ENCODE measurements at regions of chr16 and their contacts with region 1.

Region 1: DNA sequence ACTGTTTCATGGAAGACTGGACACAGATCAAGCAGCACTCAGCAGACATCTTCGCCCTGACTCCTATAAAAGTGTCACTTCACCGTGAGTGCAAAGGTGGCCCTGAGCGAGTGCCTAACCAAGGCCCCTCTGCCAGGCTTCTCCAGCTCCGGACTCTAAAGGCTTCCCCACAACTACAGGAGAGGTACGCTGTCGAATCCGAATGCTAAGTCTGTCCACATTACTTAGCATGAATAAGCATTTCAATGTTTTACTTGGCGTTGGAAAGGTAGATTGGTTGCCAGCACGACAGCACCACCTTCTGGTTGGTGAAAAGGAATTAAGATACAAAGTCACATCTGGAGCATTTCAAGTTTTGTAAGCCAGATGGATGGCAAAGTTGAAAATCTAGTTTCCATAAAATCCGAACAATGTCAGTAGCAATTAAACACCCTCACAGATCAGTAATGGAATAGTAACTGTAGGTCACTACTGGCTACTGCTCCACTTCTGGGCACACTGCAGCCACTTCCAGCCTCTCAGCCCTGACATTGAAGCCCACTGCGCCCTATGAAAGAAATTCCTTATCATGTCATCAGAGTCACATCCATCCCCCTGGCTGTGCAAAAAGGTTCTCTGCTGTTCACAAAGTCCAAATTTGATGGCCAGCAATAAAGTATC is 100.9 kb downstream of the PARN start:
- DNase-seq: peak; percentile 82
- H3K4me3 ChIP-seq: no peak overlapping the region
- H3K27ac ChIP-seq: peak overlapping the region; percentile 47
- H3K4me1 ChIP-seq: peaks cover 16% of the 10 kb centered on the region
- H3K27me3 ChIP-seq: no peaks in the 10 kb centered on the region
- CTCF ChIP-seq: peak; percentile 78 to 83

Region 2: DNA sequence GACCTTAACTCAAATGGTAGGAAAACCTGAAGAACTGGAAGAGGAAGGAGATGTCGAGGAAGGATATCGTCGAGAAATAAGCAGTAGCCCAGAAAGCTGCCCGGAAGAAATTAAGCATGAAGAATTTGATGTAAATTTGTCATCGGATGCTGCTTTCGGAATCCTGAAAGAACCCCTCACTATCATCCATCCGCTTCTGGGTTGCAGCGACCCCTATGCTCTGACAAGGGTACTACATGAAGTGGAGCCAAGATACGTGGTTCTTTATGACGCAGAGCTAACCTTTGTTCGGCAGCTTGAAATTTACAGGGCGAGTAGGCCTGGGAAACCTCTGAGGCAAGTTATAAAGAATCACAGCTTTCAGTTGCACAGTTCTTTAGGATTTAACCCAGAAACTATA is 593.7 kb before region 1 on chr16:
- CTCF ChIA-PET with region 1: no interaction called
- dilution Hi-C with region 1: no loop called
- in situ Hi-C with region 1: loop called in 1 of 2 experiments (anchors 25 kb)
- intact Hi-C with region 1: no loop called
- DNase-seq: no peak
- H3K4me3 ChIP-seq: no peak overlapping the region
- H3K27ac ChIP-seq: no peak overlapping the region
- H3K4me1 ChIP-seq: peaks cover 7% of the 10 kb centered on the region
- H3K27me3 ChIP-seq: no peaks in the 10 kb centered on the region
- CTCF ChIP-seq: peak; percentile 51 to 53

Region 3: DNA sequence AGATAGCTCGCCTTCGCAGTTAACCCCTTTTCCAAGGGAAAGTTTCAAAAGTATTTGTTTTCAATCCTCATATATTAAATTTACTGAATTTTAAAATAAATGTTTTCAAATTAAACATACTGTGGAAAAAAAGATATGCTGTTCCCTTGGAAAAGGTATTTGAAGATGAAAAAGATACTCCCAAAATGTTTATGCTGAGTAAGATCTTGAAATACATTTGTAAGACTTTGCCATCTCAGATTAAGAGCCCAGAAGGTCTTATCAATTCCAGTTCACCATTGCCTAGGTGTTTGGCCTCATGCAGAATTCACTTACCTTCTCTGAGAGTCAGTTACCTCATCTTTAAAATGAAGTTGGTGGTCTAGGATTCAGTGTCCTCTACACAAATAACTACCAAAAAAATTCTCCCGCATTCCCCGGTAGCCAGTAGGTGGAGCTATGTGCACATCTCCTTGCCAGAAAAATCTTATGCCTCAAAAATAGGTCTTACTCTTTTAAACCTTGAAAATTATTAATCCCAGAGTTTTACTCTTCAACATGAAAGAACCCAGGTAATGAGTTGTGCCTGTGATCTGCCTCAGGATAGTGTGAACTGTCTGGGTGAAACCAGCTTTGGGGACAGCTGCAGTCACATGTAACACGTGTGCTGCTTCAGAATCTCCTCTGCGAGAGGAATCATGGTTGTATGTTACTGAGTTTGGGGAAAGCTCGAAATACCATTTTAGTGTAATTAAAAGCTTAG is 279.7 kb before region 1 on chr16:
- CTCF ChIA-PET with region 1: no interaction called
- dilution Hi-C with region 1: no loop called
- in situ Hi-C with region 1: no loop called
- intact Hi-C with region 1: loop called (anchors 1 kb)
- DNase-seq: peak; percentile 11
- H3K4me3 ChIP-seq: no peak overlapping the region
- H3K27ac ChIP-seq: no peak overlapping the region
- H3K4me1 ChIP-seq: no peaks in the 10 kb centered on the region
- H3K27me3 ChIP-seq: no peaks in the 10 kb centered on the region
- CTCF ChIP-seq: peak; percentile 85

Region 4: GRCh38 chr16:14285513-14286385 is 243.4 kb before region 1 on chr16:
- CTCF ChIA-PET with region 1: no interaction called
- dilution Hi-C with region 1: no loop called
- in situ Hi-C with region 1: no loop called
- intact Hi-C with region 1: loop called (anchors 5 kb)
- DNase-seq: peak; percentile 88
- H3K4me3 ChIP-seq: peak overlapping the region; percentile 77 to 94 (median 87)
- H3K27ac ChIP-seq: peak overlapping the region; percentile 31
- H3K4me1 ChIP-seq: peaks cover 6% of the 10 kb centered on the region
- H3K27me3 ChIP-seq: no peaks in the 10 kb centered on the region
- CTCF ChIP-seq: no peak

Region 5: DNA sequence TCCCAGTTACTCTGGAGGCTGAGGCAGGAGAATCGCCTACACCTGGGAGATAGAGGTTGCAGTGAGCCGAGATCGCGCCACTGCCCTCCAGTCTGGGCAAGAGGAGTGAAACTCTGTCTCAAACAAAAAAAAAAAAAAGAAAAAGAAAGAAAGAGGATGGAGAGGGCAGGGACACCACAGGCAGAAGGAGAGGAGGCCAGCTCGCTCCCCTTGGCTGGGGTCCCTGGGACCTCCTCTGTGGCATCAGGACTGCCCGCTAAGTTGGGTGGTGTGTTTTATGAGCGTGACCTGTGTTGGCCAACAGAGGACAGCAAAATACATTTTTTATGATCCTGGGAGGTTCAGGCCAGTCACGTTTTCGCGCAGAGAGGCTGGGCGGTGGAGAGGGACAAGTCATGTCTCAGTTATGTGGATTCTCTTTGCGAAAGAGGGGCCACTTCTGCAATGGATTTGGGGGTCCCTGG is 228.4 kb before region 1 on chr16:
- CTCF ChIA-PET with region 1: no interaction called
- dilution Hi-C with region 1: no loop called
- in situ Hi-C with region 1: loop called (anchors 5 kb)
- intact Hi-C with region 1: loop called (anchors 1 kb)
- DNase-seq: peak; percentile 77
- H3K4me3 ChIP-seq: peak overlapping the region in 2 of 3 experiments; percentile 77 to 96
- H3K27ac ChIP-seq: no peak overlapping the region
- H3K4me1 ChIP-seq: peaks cover 7% of the 10 kb centered on the region
- H3K27me3 ChIP-seq: no peaks in the 10 kb centered on the region
- CTCF ChIP-seq: peak; percentile 64 to 83

Region 6: GRCh38 chr16:14436401-14436955 is 92.7 kb before region 1 on chr16:
- CTCF ChIA-PET with region 1: no interaction called
- dilution Hi-C with region 1: no loop called
- in situ Hi-C with region 1: no loop called
- intact Hi-C with region 1: no loop called
- DNase-seq: no peak
- H3K4me3 ChIP-seq: no peak overlapping the region
- H3K27ac ChIP-seq: no peak overlapping the region
- H3K4me1 ChIP-seq: no peaks in the 10 kb centered on the region
- H3K27me3 ChIP-seq: no peaks in the 10 kb centered on the region
- CTCF ChIP-seq: no peak

Region 7: DNA sequence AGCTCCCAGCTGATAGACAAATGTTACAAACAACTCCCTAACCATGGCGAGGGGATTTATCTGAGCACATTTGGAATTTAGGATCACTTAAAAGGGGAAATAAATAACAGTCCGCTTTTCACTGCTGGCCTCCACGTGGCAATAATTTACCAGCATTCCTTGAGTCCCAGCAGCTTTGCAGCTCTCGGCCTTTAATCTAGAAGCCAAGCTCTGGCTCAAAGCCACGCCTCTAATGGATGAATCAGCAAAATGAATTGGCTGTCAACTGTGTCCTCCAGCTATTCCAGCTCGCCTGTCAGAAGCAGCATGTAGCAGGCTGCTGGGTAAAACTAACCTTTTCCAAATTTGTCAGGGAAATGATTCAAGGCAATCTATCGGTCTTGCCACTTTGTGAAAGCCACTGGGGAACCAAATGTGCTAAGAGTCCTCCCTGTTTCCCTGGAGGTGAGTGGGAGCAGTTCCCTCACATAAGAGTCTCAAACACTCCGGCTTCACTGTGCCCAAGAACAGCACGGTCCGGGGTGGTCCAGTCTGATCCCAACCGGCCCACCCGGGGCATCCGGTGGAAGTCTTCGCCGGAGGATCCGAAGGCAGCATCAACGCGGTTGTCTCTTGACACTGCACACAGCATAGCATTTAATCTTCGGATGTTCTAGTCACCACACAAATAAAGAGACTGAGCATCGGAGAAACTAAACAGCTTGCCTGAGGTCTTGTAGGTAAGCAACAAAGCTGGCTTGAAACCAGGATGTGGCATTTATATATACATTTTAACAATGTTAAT is 42.4 kb before region 1 on chr16:
- CTCF ChIA-PET with region 1: no interaction called
- dilution Hi-C with region 1: no loop called
- in situ Hi-C with region 1: no loop called
- intact Hi-C with region 1: loop called (anchors 2 kb)
- DNase-seq: peak; percentile 87
- H3K4me3 ChIP-seq: peak overlapping the region; percentile 16 to 39 (median 22)
- H3K27ac ChIP-seq: peak overlapping the region; percentile 50
- H3K4me1 ChIP-seq: peaks cover 17% of the 10 kb centered on the region
- H3K27me3 ChIP-seq: no peaks in the 10 kb centered on the region
- CTCF ChIP-seq: no peak

Region 8: GRCh38 chr16:14501331-14502255 is 27.5 kb before region 1 on chr16:
- CTCF ChIA-PET with region 1: no interaction called
- dilution Hi-C with region 1: no loop called
- in situ Hi-C with region 1: no loop called
- intact Hi-C with region 1: loop called (anchors 2 kb)
- DNase-seq: peak; percentile 98
- H3K4me3 ChIP-seq: peak overlapping the region in 2 of 3 experiments; percentile 4 to 17
- H3K27ac ChIP-seq: peak overlapping the region; percentile 94
- H3K4me1 ChIP-seq: peaks cover 60% of the 10 kb centered on the region
- H3K27me3 ChIP-seq: no peaks in the 10 kb centered on the region
- CTCF ChIP-seq: no peak

Region 9: GRCh38 chr16:14682121-14682520 is 153.0 kb after region 1 on chr16:
- CTCF ChIA-PET with region 1: no interaction called
- dilution Hi-C with region 1: no loop called
- in situ Hi-C with region 1: no loop called
- intact Hi-C with region 1: no loop called
- DNase-seq: no peak
- H3K4me3 ChIP-seq: no peak overlapping the region
- H3K27ac ChIP-seq: no peak overlapping the region
- H3K4me1 ChIP-seq: no peaks in the 10 kb centered on the region
- H3K27me3 ChIP-seq: no peaks in the 10 kb centered on the region
- CTCF ChIP-seq: no peak